Activated CD4-positive, alpha-beta T cell treated with anti-CD3 and anti-CD28 coated beads, Interleukin-2, amount 10 ng/mL, durations not matched to agents 7 days and 5 days (primary cell): ENCODE measurements at regions of chr18 and their contacts with region 1.

Region 1: DNA sequence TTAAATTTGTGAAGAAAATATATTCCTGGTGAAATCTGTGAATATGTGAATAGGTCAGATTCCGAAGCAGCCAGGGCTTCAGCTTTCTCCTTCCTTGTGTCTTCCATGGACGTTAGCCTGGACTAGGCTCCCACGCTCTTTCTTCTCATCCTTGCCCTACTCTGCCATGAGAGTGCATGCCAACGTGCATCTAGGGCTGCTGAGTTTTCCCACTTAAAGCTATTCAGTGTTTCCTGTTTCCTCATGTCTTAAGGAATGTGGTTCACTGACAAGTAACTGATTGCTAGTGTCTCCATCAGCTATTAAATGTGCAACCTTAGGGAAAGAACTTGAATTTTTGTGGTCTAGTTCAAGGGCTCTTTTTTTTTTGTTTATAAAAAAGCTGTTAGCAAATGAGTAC is 642.3 kb upstream of the LINC00305 start:
- DNase-seq: no peak
- H3K4me3 Mint-ChIP-seq: no peak overlapping the region
- H3K27ac Mint-ChIP-seq: no peak overlapping the region
- H3K4me1 Mint-ChIP-seq: no peaks in the 10 kb centered on the region
- H3K27me3 Mint-ChIP-seq: no peaks in the 10 kb centered on the region

Region 2: DNA sequence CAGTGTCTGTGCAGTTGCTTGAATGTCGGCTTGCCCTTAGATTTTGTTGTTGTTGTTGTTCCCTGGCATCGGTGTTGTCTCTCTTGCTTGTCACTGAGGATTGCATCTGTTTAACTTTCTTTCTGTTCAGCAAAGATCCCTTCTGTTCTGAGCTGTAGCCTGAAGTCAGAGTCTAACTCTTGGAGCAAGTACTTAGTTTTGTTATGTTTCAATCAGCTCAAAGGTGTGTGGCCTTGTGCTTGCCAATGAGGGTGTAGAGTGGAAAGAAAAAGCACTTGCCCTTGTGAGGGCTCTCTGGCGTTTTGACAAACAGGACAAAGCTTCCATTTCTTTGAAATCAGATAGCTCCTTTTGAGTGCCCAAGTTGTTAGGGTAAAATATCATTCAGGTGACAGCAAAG is 202.5 kb after region 1 on chr18:
- CTCF ChIA-PET with region 1: no interaction called
- POLR2A ChIA-PET with region 1: interaction called, 11 read pairs
- DNase-seq: no peak
- H3K4me3 Mint-ChIP-seq: no peak overlapping the region
- H3K27ac Mint-ChIP-seq: peak overlapping the region; percentile 5
- H3K4me1 Mint-ChIP-seq: no peaks in the 10 kb centered on the region
- H3K27me3 Mint-ChIP-seq: no peaks in the 10 kb centered on the region

Region 3: GRCh38 chr18:65049586-65049985 is 258.4 kb after region 1 on chr18:
- CTCF ChIA-PET with region 1: no interaction called
- POLR2A ChIA-PET with region 1: no interaction called
- DNase-seq: no peak
- H3K4me3 Mint-ChIP-seq: no peak overlapping the region
- H3K27ac Mint-ChIP-seq: no peak overlapping the region
- H3K4me1 Mint-ChIP-seq: no peaks in the 10 kb centered on the region
- H3K27me3 Mint-ChIP-seq: no peaks in the 10 kb centered on the region